IMR-90 (cell line): ENCODE measurements at regions of chr5 and their contacts with region 1.

Region 1: DNA sequence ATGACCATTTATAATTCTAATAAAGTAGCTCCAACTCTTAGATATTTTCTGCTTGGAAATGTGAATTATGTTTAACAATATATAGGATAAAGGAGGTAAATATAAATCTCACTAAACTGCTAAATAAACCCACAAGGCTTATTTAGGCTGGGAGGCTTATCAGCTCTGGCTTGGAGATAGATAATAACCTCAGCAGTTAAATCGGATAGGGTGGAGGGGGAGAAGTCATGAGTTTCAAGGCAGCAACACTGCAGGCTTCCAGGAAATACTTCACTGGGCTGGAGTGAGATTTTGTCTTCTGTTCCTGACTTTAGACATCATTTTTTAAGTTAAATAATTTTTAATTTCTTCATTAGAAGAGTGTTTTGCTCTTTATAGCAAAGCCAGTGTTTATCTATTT is 80.0 kb upstream of the ITGA2 start:
- DNase-seq: no peak
- ATAC-seq: no peak; the same call in 1 of the 2 replicates
- H3K4me3 ChIP-seq: no peak overlapping the region
- H3K27ac ChIP-seq: peak overlapping the region; percentile 12; the same call in 1 of the 2 replicates
- H3K4me1 ChIP-seq: no peaks in the 10 kb centered on the region; the same call in 1 of the 2 replicates
- H3K27me3 ChIP-seq: no peaks in the 10 kb centered on the region
- CTCF ChIP-seq: no peak
- POLR2A ChIP-seq: no peak
- RAD21 ChIP-seq: no peak

Region 2: DNA sequence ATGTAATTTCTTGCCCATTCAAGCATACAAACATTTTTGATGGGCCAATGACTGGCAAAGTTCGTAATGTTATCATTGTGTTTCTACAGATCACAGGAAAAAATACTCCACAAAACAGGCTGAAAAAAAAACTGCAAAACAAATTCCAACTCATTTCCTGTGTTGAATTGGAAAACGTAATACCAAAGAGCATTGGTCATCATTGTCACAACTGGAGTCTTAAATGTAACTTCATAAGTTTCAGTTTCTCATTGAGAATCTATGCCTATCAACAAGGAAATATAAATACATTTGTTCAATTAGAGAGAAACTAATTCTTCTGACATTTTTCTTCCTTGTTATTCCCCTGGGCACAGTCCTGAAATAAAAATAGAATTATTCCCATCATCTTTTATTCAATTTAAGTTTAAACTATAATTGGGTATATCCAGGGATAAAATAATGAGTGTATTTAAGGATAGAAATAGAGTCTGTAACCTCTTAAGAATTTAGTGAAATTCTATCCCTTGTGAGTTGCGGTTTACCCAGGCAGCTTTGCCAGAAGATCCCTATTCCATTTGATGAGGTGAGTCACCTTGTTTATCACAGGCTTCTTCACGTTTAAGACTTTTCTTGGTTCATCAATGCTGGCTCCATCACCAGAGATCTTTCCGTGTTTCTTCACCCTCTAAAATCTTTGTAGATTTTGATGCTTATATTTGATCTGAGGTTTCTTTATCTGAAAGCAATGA is 234.2 kb before region 1 on chr5:
- CTCF ChIA-PET with region 1: no interaction called
- POLR2A ChIA-PET with region 1: no interaction called
- dilution Hi-C with region 1: no loop called
- in situ Hi-C with region 1: loop called (anchors 10 kb)
- intact Hi-C with region 1: no loop called
- DNase-seq: peak; percentile 87
- ATAC-seq: peak; percentile 61
- H3K4me3 ChIP-seq: peak overlapping the region; percentile 1; the same call in 1 of the 2 replicates
- H3K27ac ChIP-seq: peak overlapping the region; percentile 53; the same call in 1 of the 2 replicates
- H3K4me1 ChIP-seq: peaks cover 2% of the 10 kb centered on the region; the same call in 1 of the 2 replicates
- H3K27me3 ChIP-seq: no peaks in the 10 kb centered on the region; the same call in 1 of the 2 replicates
- CTCF ChIP-seq: no peak
- POLR2A ChIP-seq: no peak
- RAD21 ChIP-seq: no peak